Tibial artery (tissue), 4 donors: ENCODE measurements at regions of chr17 and their contacts with region 1.

Region 1: DNA sequence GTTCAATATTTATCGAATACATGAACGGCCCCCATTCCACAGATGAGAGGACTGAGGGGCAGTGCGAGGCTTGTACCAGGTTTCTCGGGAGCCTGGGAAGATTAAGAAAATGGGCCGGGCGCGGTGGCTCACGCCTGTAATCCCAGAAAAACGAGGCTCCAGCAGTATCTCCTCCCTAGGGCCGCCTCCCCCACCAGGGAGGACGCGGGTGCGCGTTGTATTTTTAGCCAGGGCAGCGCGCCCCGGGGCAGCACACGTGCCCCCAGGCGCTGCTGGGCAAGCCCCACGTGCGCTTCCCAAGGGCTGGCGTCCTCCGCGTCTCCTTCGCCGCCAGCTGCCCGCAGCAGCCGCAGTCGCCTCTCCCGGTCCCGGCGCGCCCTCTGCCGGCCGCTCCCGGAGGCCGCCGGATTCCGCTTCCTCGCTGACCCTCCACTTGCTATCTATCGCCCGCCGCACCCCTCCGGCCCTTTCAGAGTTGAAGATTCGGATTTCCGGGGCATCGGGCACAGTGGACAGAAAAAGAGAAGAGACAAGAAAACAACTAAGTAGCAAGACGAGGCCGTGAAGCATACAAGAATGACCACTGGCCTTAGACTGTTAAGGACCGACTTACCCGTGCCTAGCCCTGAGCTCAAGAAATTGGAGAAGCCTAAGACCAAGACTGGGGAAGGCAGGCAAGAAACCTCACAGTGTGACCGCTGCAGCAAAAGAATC is 1.9 kb upstream of the YBX2 start:
- DNase-seq: peak; percentile 74 to 94
- H3K4me3 ChIP-seq: peak overlapping the region; percentile 6 to 27
- H3K27ac ChIP-seq: peak overlapping the region; percentile 29 to 61
- H3K4me1 ChIP-seq: peaks cover 0 to 44% (median 32%) of the 10 kb centered on the region in 4 donors
- H3K27me3 ChIP-seq: peaks cover 0 to 48% of the 10 kb centered on the region in 2 donors
- CTCF ChIP-seq: peak; percentile 92 to 98

Region 2: DNA sequence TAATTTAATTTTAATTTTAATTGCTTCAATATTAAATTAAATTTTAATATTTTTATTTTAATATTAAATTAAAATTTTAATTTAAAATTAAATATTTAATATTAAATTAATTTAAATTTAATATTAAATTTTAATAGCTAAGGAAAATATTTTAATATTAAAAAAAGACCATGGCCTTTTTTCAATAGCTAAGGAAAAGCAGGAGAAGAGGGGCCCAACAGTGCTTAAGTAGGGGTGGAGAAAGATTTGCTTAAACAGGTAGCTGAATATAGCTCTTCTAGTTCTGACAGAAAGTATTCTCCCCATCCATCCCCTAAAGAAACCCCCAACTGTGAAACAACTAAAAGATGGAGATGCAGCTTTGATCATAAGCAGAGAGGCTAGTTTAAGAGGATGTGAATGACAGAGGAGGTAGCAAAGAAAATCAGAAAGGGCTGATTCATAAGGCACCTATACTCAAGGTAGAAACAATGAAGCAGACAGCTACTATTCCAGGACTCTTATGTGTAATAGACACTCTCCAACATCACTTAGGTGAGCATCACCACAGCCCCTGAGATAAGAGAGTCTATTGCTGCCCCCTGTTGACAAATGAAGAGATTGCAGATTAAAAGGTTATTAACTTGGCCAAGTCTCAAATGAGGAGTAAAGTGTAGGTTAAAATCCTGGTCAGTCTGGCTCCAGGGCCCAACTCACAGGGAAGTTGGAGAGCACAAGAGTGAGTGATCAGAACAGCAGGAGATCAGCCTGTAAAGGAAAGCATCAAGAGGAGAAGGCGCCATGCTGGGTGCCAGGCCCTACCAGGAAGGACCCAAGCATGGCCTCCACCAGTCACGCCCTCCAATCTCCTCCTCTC is 291.7 kb before region 1 on chr17:
- intact Hi-C with region 1: no loop called
- DNase-seq: no peak
- H3K4me3 ChIP-seq: no peak overlapping the region
- H3K27ac ChIP-seq: no peak overlapping the region
- H3K4me1 ChIP-seq: peaks cover 0 to 4% (median 2%) of the 10 kb centered on the region in 4 donors
- H3K27me3 ChIP-seq: no peaks in the 10 kb centered on the region
- CTCF ChIP-seq: peak; percentile 66 to 70

Region 3: DNA sequence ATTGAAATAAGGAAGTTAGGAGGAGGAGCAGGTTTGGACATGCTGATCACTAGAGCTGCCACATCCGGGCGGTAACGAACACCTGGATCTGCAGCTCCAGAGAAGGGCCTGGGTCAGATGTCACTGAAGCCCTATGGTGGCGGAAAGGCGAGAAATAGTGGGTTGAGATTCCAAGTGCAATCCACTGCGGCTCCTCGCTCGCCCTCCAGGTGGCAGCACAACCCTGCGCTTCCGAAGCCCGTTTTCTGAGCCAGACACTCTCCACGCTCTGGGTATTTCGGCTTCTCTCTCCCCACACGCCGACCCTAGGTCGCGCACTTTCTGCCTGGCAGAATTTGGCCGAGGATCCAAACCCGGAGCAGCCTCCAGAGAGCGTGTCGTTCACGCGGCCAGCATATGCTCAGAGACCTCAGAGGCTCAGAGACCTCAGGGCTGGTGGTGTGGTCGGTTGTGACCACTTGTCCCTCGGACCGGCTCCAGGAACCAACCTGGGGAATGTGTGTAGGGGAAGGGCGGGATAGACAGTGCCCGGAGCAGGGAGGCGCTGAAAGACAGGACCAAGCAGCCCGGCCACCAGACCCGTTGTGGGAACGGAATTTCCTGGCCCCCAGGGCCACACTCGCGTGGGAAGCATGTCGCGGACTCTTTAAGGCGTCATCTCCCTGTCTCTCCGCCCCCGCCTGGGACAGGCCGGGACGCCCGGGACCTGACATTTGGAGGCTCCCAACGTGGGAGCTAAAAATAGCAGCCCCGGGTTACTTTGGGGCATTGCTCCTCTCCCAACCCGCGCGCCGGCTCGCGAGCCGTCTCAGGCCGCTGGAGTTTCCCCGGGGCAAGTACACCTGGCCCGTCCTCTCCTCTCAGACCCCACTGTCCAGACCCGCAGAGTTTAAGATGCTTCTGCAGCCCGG is 15.6 kb before region 1 on chr17:
- intact Hi-C with region 1: loop called (anchors 1 kb)
- DNase-seq: peak; percentile 74 to 94
- H3K4me3 ChIP-seq: peak overlapping the region; percentile 53 to 56
- H3K27ac ChIP-seq: peak overlapping the region; percentile 93 to 94
- H3K4me1 ChIP-seq: peaks cover 0 to 27% (median 21%) of the 10 kb centered on the region in 4 donors
- H3K27me3 ChIP-seq: no peaks in the 10 kb centered on the region
- CTCF ChIP-seq: peak; percentile 90 to 96

Region 4: GRCh38 chr17:7479404-7480221 is 183.3 kb after region 1 on chr17 and contains the start of gene ZBTB4:
- intact Hi-C with region 1: no loop called
- DNase-seq: peak; percentile 57 to 84
- H3K4me3 ChIP-seq: peak within 1 kb of the TSS; percentile 95 to 100
- H3K27ac ChIP-seq: peak within 1 kb of the TSS; percentile 100
- H3K4me1 ChIP-seq: peaks cover 0 to 60% (median 44%) of the 10 kb centered on the region in 4 donors
- H3K27me3 ChIP-seq: no peaks in the 10 kb centered on the region
- CTCF ChIP-seq: no peak

Region 5: GRCh38 chr17:7593296-7593695 is 296.9 kb after region 1 on chr17:
- intact Hi-C with region 1: no loop called
- DNase-seq: no peak
- H3K4me3 ChIP-seq: no peak overlapping the region
- H3K27ac ChIP-seq: no peak overlapping the region
- H3K4me1 ChIP-seq: peaks cover 0 to 17% (median 15%) of the 10 kb centered on the region in 4 donors
- H3K27me3 ChIP-seq: no peaks in the 10 kb centered on the region
- CTCF ChIP-seq: no peak

Region 6: GRCh38 chr17:7612294-7612640 is 315.9 kb after region 1 on chr17:
- intact Hi-C with region 1: no loop called
- DNase-seq: no peak
- H3K4me3 ChIP-seq: no peak overlapping the region
- H3K27ac ChIP-seq: peak overlapping the region in 1 of 2 donors; percentile 6
- H3K4me1 ChIP-seq: peaks cover 0 to 43% (median 28%) of the 10 kb centered on the region in 4 donors
- H3K27me3 ChIP-seq: no peaks in the 10 kb centered on the region
- CTCF ChIP-seq: no peak